Activated naive CD4-positive, alpha-beta T cell treated with anti-CD3 and anti-CD28 coated beads for 36 hours (primary cell): ENCODE measurements at regions of chr11 and their contacts with region 1.

Region 1: GRCh38 chr11:121446752-121447156 is 5.4 kb upstream of the SORL1 start:
- DNase-seq: no peak
- H3K4me3 Mint-ChIP-seq: no peak overlapping the region
- H3K27ac Mint-ChIP-seq: peak overlapping the region; percentile 80
- H3K4me1 Mint-ChIP-seq: peaks cover 75% of the 10 kb centered on the region
- H3K27me3 Mint-ChIP-seq: no peaks in the 10 kb centered on the region

Region 2: GRCh38 chr11:121292495-121293287 is 154.1 kb before region 1 on chr11 and contains the start of gene SC5D:
- CTCF ChIA-PET with region 1: no interaction called
- intact Hi-C with region 1: loop called (anchors 1 kb)
- DNase-seq: peak; percentile 97
- H3K4me3 Mint-ChIP-seq: peak within 1 kb of the TSS; percentile 90
- H3K27ac Mint-ChIP-seq: peak within 1 kb of the TSS; percentile 95
- H3K4me1 Mint-ChIP-seq: peaks cover 32% of the 10 kb centered on the region
- H3K27me3 Mint-ChIP-seq: no peaks in the 10 kb centered on the region
- total RNA-seq, gene SC5D: 29.6 to 31.7 TPM

Region 3: DNA sequence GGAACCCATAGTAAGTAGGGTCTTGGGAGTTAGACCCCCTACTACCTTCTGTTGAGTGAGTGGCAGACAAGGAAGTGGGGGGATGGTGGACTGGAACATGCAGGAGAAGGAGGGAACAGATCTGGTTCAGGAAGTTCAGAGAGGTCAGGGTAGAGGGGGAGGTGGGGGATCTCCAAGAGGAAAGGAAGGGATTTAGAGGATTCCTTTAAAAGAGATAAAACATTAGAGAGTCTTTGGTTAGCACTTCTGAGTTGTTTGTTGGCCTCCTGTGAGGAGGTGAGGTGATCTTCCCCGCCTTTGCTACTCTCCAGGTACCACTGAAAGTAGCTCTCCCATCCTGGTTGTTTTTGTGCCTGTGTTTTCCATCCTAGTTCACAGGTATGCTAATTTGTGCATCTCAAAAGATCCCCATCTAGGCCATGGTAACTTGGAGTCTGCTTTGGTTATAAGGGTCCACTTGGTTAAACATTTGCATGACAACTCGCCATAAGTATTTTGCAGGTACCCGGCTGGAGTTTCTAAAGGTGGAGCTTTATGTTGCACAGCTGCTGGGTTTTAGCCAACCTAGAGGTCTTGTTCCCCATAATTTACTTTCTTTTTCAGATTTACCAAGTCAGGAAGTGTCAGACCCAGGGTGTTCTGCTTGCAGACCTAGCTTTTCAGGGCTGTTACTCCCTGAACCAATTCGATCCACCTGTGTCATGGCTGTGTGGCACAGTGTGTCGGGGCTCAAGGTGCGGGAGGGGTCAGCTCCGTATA is 73.9 kb before region 1 on chr11:
- CTCF ChIA-PET with region 1: interaction called, 3 read pairs
- intact Hi-C with region 1: loop called (anchors 1 kb)
- DNase-seq: peak; percentile 26
- H3K4me3 Mint-ChIP-seq: peak overlapping the region; percentile 17
- H3K27ac Mint-ChIP-seq: no peak overlapping the region
- H3K4me1 Mint-ChIP-seq: peaks cover 73% of the 10 kb centered on the region
- H3K27me3 Mint-ChIP-seq: no peaks in the 10 kb centered on the region

Region 4: GRCh38 chr11:121414141-121414913 is 32.4 kb before region 1 on chr11:
- CTCF ChIA-PET with region 1: interaction called, 3 read pairs
- intact Hi-C with region 1: loop called (anchors 2 kb)
- DNase-seq: no peak
- H3K4me3 Mint-ChIP-seq: no peak overlapping the region
- H3K27ac Mint-ChIP-seq: no peak overlapping the region
- H3K4me1 Mint-ChIP-seq: peaks cover 58% of the 10 kb centered on the region
- H3K27me3 Mint-ChIP-seq: no peaks in the 10 kb centered on the region

Region 5: GRCh38 chr11:121431820-121432526 is 14.8 kb before region 1 on chr11:
- CTCF ChIA-PET with region 1: interaction called, 9 read pairs
- intact Hi-C with region 1: loop called (anchors 1 kb)
- DNase-seq: no peak
- H3K4me3 Mint-ChIP-seq: no peak overlapping the region
- H3K27ac Mint-ChIP-seq: no peak overlapping the region
- H3K4me1 Mint-ChIP-seq: peaks cover 45% of the 10 kb centered on the region
- H3K27me3 Mint-ChIP-seq: no peaks in the 10 kb centered on the region

Region 6: DNA sequence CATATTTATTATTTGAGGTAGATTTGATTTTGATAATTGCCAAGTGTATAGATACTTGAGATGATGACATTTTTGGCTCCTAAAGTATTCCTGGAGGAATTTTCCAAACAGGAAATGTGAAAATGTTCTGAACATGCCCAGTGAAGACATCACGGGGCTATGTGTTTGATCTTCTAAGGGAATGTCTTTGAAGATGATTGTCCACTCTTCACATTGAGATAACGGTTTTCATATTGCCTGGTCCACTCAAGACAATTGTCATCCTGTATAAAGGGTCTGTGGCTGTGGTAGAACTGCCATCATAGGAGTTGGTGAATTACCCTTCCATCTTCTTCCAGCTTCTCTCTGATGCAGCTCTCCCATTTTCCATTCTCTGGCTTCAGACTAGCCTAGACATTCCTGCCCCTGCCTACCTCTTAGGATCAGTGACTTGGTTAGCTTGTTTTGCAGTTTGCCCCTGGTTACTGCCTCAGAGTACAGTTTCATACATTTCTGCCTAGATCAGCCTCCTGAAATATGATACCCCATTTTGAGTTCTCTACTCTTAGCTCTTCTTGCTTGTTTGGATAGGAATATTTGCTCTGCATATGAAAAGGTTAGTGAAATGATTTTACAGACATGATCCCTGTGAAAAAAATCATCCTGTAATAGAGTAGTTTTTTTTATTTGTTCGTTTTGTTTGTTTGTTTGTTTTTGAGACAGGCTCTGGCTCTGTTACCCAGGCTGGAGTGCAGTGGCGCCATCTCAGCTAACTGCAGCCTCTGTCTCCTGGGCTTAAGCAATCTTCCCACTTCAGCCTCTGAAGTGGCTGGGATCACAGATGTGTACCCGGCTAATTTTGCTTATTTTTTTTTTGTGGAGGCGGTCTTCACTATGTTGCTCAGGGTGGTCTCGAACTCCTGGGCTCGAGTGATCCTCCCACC is 117.4 kb after region 1 on chr11:
- CTCF ChIA-PET with region 1: no interaction called
- intact Hi-C with region 1: loop called (anchors 1 kb)
- DNase-seq: no peak
- H3K4me3 Mint-ChIP-seq: no peak overlapping the region
- H3K27ac Mint-ChIP-seq: no peak overlapping the region
- H3K4me1 Mint-ChIP-seq: peaks cover 41% of the 10 kb centered on the region
- H3K27me3 Mint-ChIP-seq: no peaks in the 10 kb centered on the region

Region 7: DNA sequence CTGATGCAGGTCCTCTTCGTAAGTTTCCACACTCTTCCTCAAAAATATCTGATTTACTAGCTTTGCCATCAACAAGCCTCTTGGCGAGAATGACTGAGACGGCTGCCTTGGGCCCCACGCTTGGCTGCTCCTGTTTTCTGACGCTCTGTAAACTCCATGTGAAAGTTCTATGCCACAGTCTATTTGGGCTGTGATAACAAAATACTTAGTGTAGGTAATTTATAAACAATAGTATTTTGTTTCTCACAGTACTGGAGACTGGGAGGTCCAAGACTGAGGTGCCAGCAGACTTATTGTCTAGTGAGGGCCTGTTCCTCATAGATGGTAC is 129.2 kb after region 1 on chr11:
- CTCF ChIA-PET with region 1: no interaction called
- intact Hi-C with region 1: no loop called
- DNase-seq: no peak
- H3K4me3 Mint-ChIP-seq: no peak overlapping the region
- H3K27ac Mint-ChIP-seq: peak overlapping the region; percentile 3
- H3K4me1 Mint-ChIP-seq: peaks cover 19% of the 10 kb centered on the region
- H3K27me3 Mint-ChIP-seq: no peaks in the 10 kb centered on the region

Region 8: GRCh38 chr11:121591405-121592033 is 144.8 kb after region 1 on chr11:
- CTCF ChIA-PET with region 1: interaction called, 23 read pairs
- intact Hi-C with region 1: loop called (anchors 1 kb)
- DNase-seq: peak; percentile 87
- H3K4me3 Mint-ChIP-seq: no peak overlapping the region
- H3K27ac Mint-ChIP-seq: no peak overlapping the region
- H3K4me1 Mint-ChIP-seq: peaks cover 14% of the 10 kb centered on the region
- H3K27me3 Mint-ChIP-seq: no peaks in the 10 kb centered on the region

Region 9: DNA sequence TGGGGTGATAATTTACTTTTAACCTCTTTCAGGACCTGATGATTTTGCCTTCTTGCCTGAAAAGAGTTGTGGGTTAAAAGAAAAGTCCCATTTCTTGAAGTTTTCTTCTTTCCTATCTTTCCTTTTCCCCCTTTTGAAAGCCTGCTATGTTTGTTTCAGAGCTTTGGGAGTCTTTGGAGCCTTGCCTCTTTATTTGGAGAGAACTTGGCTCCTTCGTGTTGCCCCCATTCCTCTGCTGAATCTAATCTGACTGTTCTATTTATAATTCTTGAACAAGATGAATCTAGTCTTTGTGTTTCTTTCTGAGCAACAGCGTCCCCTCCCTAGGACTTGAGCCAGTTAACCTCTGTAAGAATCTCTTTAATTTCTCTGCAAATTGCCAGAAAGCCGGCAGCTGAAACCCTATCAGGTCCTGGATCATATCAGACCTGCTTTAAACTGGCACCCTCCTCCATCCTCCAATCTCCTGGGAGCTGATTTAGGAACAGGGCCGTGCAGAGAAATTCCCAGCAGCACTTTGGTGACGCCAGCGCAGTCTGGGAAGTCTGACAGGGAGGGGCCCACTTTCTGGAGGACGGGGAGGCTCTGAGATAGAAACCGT is 295.1 kb after region 1 on chr11:
- CTCF ChIA-PET with region 1: no interaction called
- intact Hi-C with region 1: no loop called
- DNase-seq: no peak
- H3K4me3 Mint-ChIP-seq: no peak overlapping the region
- H3K27ac Mint-ChIP-seq: no peak overlapping the region
- H3K4me1 Mint-ChIP-seq: no peaks in the 10 kb centered on the region
- H3K27me3 Mint-ChIP-seq: peaks cover 3% of the 10 kb centered on the region